Activated CD4-positive, alpha-beta T cell treated with anti-CD3 and anti-CD28 coated beads, Interleukin-2, amount 10 ng/mL, durations not matched to agents 24 days and 14 days (primary cell): ENCODE measurements at regions of chr9 and their contacts with region 1.

Region 1: GRCh38 chr9:129139993-129140396 is 28.8 kb downstream of the PTPA start:
- DNase-seq: peak; percentile 93
- H3K4me3 Mint-ChIP-seq: peak overlapping the region; percentile 80
- H3K27ac Mint-ChIP-seq: peak overlapping the region; percentile 93
- H3K4me1 Mint-ChIP-seq: peaks cover 37% of the 10 kb centered on the region
- H3K27me3 Mint-ChIP-seq: no peaks in the 10 kb centered on the region

Region 2: DNA sequence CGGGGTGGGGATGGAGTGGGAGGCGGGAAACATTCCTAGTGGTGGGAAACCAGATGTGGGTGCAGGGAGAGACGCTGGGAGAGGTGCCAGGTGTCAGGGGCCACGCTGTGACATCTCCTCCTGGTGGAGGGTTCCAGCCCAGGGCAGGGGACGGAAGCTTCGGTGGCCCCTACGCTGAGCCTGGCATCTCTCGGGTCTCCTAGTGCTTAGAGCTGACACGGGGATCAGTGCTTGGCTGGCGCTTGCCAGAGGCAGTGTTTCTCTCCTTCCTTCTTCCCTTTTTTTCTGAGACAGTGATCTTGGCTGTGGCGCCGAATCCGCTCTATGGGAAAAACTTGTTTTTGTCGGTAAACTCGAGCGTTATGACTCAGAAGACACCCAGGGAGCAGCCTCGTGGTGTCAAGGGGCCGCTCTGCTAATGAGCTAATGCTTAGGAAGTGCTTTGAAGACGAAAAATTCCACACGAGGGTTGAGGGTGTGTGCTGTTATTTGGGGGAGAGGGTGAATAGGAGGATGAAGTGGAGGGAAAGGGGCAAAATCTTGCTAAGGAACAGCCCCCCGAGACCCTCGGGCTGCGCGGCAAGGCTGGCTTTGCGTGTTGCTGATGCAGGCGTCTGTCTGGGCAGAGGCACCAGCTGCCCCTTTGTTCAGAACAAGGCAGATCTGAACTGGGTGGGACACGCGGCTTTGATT is 58.5 kb after region 1 on chr9:
- intact Hi-C with region 1: no loop called
- DNase-seq: no peak
- H3K4me3 Mint-ChIP-seq: no peak overlapping the region
- H3K27ac Mint-ChIP-seq: no peak overlapping the region
- H3K4me1 Mint-ChIP-seq: peaks cover 2% of the 10 kb centered on the region
- H3K27me3 Mint-ChIP-seq: peaks cover 16% of the 10 kb centered on the region

Region 3: DNA sequence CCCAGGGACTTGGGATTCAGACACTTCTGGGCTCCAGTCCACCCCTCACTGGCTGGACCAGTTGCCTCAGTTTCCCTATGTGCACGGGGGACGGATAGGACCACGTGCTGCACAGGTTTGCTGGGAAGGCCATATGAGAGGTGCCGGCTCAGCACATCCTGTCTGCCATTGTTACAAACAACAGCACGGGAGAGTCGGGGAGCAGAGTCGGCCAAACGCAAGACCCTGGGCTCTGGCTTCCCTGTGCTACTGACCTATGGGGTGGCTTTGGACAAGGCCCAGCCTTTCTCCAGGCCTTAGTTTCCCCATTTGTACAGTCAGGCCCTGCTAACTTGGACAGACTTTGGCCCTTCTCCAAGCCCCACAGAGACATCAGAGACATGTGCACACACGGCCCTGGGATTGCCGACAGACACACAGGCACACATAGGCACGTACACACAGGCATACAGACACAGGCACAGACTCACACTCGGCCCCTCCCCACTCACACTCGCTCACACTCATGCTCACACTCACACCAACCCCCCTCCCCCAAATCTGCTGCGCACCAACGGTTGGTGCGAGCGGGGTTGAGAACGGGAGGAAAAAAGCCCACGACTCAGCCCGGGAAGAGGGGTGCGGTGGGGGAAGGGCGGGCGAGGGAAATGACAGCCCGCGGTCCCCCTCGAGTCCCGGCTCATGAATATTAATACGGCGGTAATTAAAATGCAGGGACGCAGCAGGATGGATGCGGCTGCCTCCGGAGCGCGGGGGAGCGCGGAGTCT is 347.8 kb after region 1 on chr9:
- intact Hi-C with region 1: loop called (anchors 5 kb)
- DNase-seq: peak; percentile 79
- H3K4me3 Mint-ChIP-seq: peak overlapping the region; percentile 92
- H3K27ac Mint-ChIP-seq: peak overlapping the region; percentile 96
- H3K4me1 Mint-ChIP-seq: peaks cover 61% of the 10 kb centered on the region
- H3K27me3 Mint-ChIP-seq: no peaks in the 10 kb centered on the region

Region 4: GRCh38 chr9:129610473-129611301 is 470.7 kb after region 1 on chr9:
- intact Hi-C with region 1: loop called (anchors 1 kb)
- DNase-seq: peak; percentile 92
- H3K4me3 Mint-ChIP-seq: peak overlapping the region; percentile 84
- H3K27ac Mint-ChIP-seq: peak overlapping the region; percentile 89
- H3K4me1 Mint-ChIP-seq: peaks cover 35% of the 10 kb centered on the region
- H3K27me3 Mint-ChIP-seq: peaks cover 5% of the 10 kb centered on the region

Region 5: DNA sequence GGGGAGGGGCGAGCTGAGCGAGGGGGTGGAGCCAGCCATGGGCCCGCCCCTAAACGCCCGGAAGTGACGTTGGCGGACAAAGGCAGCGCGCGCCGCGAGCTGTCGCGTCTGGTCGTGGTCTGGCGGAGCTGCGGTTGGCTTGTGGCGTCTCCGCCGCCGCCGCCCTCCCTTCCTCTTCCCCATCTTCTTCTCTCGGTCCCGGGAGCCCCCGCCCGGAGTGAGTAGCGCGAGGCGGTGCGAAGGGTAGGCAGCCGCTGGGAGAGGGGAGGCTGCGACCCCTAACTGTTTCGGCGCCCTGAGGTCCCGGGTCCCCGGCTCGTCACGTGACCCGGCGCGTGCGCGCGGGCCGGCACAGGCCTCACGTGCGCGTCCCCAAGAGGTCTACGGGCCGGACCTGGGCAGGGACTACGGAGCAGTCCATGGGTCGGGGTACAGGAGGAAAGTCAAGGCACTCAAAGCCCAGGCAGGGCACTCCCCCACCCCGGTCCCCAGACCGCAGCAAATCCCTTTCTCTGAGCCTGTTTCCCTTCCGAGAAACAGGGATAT is 486.2 kb after region 1 on chr9 and contains the start of gene NTMT1:
- intact Hi-C with region 1: loop called (anchors 1 kb)
- DNase-seq: peak; percentile 97
- H3K4me3 Mint-ChIP-seq: peak within 1 kb of the TSS; percentile 83
- H3K27ac Mint-ChIP-seq: peak within 1 kb of the TSS; percentile 93
- H3K4me1 Mint-ChIP-seq: peaks cover 33% of the 10 kb centered on the region
- H3K27me3 Mint-ChIP-seq: peaks cover 8% of the 10 kb centered on the region
- total RNA-seq, gene NTMT1: 72.0 and 72.4 TPM in 2 replicates